Colonic mucosa (tissue), 4 donors: ENCODE measurements at regions of chr4 and their contacts with region 1.

Region 1: DNA sequence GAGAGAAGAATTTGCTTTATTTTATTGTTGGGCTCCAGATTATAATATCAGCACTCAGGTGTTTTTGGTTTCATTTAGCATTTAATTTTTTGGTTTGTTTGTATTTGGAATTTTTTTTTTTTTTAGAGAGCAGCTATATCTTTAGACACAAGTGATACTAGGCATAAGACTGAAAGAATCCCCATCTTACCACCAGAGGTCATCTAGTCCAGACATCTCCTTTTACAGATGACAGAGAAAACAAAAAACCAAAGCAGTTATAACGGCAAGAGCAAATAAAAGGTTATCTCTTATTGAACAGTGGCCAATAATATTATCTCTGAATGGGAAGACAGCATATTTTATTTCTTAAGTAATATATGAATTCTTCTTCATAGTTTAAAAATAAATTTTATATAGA is 22.8 kb downstream of the USP38 start:
- DNase-seq: no peak
- H3K4me3 ChIP-seq: no peak overlapping the region
- H3K27ac ChIP-seq: no peak overlapping the region
- H3K4me1 ChIP-seq: no peaks in the 10 kb centered on the region
- H3K27me3 ChIP-seq: no peaks in the 10 kb centered on the region
- CTCF ChIP-seq: no peak

Region 2: GRCh38 chr4:142168181-142168580 is 1039.4 kb before region 1 on chr4:
- intact Hi-C with region 1: no loop called
- DNase-seq: no peak
- H3K4me3 ChIP-seq: no peak overlapping the region
- H3K27ac ChIP-seq: no peak overlapping the region
- H3K4me1 ChIP-seq: no peaks in the 10 kb centered on the region
- H3K27me3 ChIP-seq: no peaks in the 10 kb centered on the region
- CTCF ChIP-seq: no peak

Region 3: DNA sequence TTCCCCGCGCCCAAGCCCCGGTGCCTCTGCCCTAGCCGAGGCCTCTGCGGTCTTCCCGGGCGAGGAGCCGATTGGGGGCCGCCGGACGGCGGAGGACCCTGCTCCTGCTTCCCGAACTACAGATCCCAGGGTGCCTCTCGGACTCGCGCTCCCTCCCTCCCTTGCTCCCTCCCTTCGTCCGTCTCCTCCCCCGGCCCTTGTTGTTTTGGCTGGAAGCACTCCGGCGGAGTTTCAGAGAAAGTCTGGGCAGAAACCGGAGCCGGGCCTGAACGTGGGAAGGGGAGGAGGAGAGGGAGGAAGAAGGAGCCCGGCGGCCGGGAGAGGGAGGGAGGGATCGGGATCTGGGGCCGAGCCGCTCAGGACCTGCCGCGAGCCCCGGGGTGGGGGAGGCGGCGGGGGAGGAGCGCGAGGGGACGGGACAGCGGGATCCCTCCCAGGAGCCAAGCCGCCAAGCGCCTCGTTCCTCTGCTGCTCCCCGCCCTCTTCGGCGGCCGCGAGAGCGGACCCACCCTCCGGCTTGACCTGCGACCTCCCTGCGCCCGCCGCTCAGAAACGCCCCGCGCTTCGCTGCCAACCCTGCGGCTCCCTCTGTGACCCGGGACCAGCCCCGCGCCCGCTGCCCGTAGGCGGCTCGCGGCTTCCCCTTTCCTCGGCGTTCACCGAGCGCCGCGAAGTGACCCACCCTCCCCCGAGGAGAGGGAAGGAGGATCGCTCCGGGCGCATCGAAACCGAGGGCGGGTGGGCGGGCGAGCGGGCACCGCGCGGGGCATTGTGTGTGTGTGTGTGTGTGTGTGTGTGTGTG is 128.6 kb after region 1 on chr4:
- intact Hi-C with region 1: loop called (anchors 10 kb)
- DNase-seq: peak; percentile 92
- H3K4me3 ChIP-seq: peak overlapping the region; percentile 71
- H3K27ac ChIP-seq: peak overlapping the region; percentile 95
- H3K4me1 ChIP-seq: peaks cover 7% of the 10 kb centered on the region
- H3K27me3 ChIP-seq: no peaks in the 10 kb centered on the region
- CTCF ChIP-seq: no peak

Region 4: GRCh38 chr4:143473334-143474126 is 266.0 kb after region 1 on chr4:
- intact Hi-C with region 1: loop called (anchors 5 kb)
- DNase-seq: no peak
- H3K4me3 ChIP-seq: no peak overlapping the region
- H3K27ac ChIP-seq: no peak overlapping the region
- H3K4me1 ChIP-seq: no peaks in the 10 kb centered on the region
- H3K27me3 ChIP-seq: no peaks in the 10 kb centered on the region
- CTCF ChIP-seq: no peak

Region 5: DNA sequence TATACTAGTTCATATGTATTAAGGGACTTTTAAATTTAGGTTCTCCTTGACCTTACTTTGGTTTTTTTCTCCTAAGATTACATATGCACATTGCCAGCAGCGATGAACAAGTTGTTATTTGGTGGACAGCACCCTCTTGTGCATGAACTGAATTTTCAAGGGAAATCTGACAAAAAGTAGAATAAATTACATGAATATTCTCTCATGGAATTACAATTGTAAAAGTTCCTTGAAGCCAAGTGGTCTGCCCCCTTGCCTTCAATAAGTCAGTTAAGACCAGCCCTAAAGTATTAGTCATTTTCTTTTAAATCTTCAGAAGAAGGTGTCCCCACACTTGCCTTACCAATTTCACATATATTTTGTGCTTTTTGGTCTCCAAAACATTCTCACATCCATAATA is 275.3 kb after region 1 on chr4:
- intact Hi-C with region 1: loop called (anchors 5 kb)
- DNase-seq: no peak
- H3K4me3 ChIP-seq: no peak overlapping the region
- H3K27ac ChIP-seq: no peak overlapping the region
- H3K4me1 ChIP-seq: no peaks in the 10 kb centered on the region
- H3K27me3 ChIP-seq: no peaks in the 10 kb centered on the region
- CTCF ChIP-seq: peak; percentile 44